ENCODE measurements at regions of chr12 and their contacts with region 1.

Region 1: GRCh38 chr12:109518820-109519665 is 41.6 kb downstream of the UBE3B start:
- H3K4me3 Mint-ChIP-seq: no peak overlapping the region
- H3K27ac Mint-ChIP-seq: no peak overlapping the region
- H3K4me1 Mint-ChIP-seq: no peaks in the 10 kb centered on the region
- H3K27me3 Mint-ChIP-seq: no peaks in the 10 kb centered on the region

Region 2: GRCh38 chr12:109775172-109775881 is 256.3 kb after region 1 on chr12:
- intact Hi-C with region 1: loop called (anchors 1 kb)
- H3K4me3 Mint-ChIP-seq: no peak overlapping the region
- H3K27ac Mint-ChIP-seq: no peak overlapping the region
- H3K4me1 Mint-ChIP-seq: peaks cover 18% of the 10 kb centered on the region
- H3K27me3 Mint-ChIP-seq: peaks cover 20% of the 10 kb centered on the region

Measured in dendritic cell treated with granulocyte-macrophage colony-stimulating factor and Interleukin-4, amounts not matched to agents 40 ng/mL and 50 ng/mL, for 4 days (primary cell).